ENCODE measurements at regions of chr17 and their contacts with region 1.

Region 1: GRCh38 chr17:39927101-39927928 is at the starts of genes LRRC3C and ORMDL3:
- DNase-seq: peak; percentile 80 to 96 (median 91)
- ATAC-seq: peak; percentile 70
- H3K4me3 ChIP-seq: peak within 1 kb of the TSS; percentile 87 to 90
- H3K4me3 Mint-ChIP-seq: peak within 1 kb of the TSS; percentile 96
- H3K27ac ChIP-seq: peak within 1 kb of the TSS; percentile 70 to 71
- H3K27ac Mint-ChIP-seq: peak within 1 kb of the TSS; percentile 91
- H3K4me1 ChIP-seq: peaks cover 50% of the 10 kb centered on the region
- H3K4me1 Mint-ChIP-seq: peaks cover 42% of the 10 kb centered on the region
- H3K27me3 ChIP-seq: no peaks in the 10 kb centered on the region
- H3K27me3 Mint-ChIP-seq: no peaks in the 10 kb centered on the region
- CTCF ChIP-seq: no peak
- total RNA-seq, gene LRRC3C: not detected
- total RNA-seq, gene ORMDL3: 136 to 140 TPM

Region 2: DNA sequence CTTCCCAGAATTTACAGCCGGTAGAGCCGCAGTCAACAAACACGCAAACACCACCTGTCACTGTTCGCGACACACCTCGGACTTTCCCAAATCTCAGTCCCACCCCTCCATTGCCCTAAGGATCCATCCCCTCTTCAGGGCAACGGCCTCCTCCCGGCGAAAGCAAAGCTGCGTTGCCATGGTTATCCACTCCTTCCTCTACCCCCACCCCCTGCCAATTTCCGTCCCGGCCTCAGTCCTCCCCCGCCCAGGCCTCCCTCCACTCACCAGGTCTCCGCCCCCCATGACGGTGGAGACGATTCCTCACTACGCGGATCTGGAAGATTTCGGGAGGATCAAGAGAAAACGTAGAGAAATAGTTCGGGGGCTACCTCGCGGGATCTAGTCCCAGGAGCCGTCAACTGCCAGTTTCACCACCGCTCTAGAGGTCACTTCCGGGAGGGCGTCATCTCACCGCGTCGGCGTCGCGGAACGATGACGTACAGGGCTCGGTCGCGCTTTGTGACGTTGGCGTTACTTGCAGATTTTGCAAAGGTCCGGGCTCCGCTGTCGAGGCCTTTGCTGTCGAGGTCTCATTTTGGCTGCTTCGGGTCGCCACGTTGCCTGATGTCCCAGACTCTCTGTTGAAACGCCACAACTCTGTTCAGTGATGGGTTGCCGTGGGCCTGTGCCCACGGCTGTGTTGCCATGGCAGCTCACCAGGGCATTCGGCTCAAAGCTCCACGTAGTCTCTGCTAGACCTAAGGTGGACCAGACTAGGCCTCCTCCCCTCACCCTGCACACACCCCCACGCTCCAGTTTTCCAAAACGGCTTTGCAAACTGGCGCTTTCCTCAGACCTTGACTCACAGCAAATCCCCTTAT is 1102.2 kb before region 1 on chr17 and contains the start of gene CWC25:
- CTCF ChIA-PET with region 1: no interaction called
- POLR2A ChIA-PET with region 1: no interaction called
- intact Hi-C with region 1: loop called in 1 of 2 experiments (anchors 2 kb)
- DNase-seq: peak; percentile 92 to 100 (median 97)
- ATAC-seq: peak; percentile 80
- H3K4me3 ChIP-seq: peak within 1 kb of the TSS; percentile 65 to 88
- H3K4me3 Mint-ChIP-seq: peak within 1 kb of the TSS; percentile 99
- H3K27ac ChIP-seq: peak within 1 kb of the TSS; percentile 97 to 98
- H3K27ac Mint-ChIP-seq: peak within 1 kb of the TSS; percentile 100
- H3K4me1 ChIP-seq: peaks cover 23% of the 10 kb centered on the region
- H3K4me1 Mint-ChIP-seq: peaks cover 35% of the 10 kb centered on the region
- H3K27me3 ChIP-seq: no peaks in the 10 kb centered on the region
- H3K27me3 Mint-ChIP-seq: no peaks in the 10 kb centered on the region
- CTCF ChIP-seq: no peak
- total RNA-seq, gene CWC25: 80.3 to 87.5 TPM

Region 3: DNA sequence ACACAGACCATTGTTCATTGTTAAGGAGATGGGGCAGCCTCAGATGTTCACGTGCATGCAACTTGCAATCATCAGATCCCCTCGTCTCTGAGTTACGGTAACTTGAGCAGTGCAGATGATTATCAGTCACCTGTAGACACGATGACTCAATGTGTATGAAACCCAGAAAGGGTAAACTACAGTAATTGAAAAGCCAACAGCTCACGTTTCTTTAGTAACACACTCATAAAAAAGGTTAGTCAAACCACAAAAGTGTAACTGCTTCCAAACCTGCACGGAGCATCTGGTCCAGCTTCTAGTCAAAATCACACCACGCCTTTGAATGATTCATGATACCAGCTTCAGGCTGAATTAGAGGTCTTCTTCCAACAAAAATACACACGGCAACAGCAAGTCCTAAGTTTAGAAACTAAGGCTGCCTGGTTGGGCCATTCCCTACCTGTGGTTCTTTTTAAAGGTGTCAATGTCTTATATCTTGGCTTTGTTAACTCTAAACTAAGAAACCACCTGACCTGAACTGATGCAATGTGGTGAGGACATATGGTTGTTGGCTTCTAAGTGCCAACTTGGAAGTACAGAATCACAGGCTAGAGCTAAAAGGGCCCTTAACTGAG is 157.2 kb before region 1 on chr17:
- CTCF ChIA-PET with region 1: no interaction called
- POLR2A ChIA-PET with region 1: interaction called, 3 read pairs
- intact Hi-C with region 1: loop called (anchors 5 kb)
- DNase-seq: peak in 8 of 9 experiments; percentile 38 to 90 (median 66)
- ATAC-seq: peak; percentile 78
- H3K4me3 ChIP-seq: peak overlapping the region in 1 of 2 experiments; percentile 1
- H3K4me3 Mint-ChIP-seq: peak overlapping the region; percentile 66
- H3K27ac ChIP-seq: peak overlapping the region; percentile 46 to 82
- H3K27ac Mint-ChIP-seq: peak overlapping the region; percentile 97
- H3K4me1 ChIP-seq: peaks cover 99% of the 10 kb centered on the region
- H3K4me1 Mint-ChIP-seq: peaks cover 96% of the 10 kb centered on the region
- H3K27me3 ChIP-seq: no peaks in the 10 kb centered on the region
- H3K27me3 Mint-ChIP-seq: no peaks in the 10 kb centered on the region
- CTCF ChIP-seq: no peak

Region 4: GRCh38 chr17:39777534-39778365 is 149.6 kb before region 1 on chr17:
- CTCF ChIA-PET with region 1: no interaction called
- POLR2A ChIA-PET with region 1: interaction called, 3 read pairs
- intact Hi-C with region 1: loop called (anchors 5 kb)
- DNase-seq: peak in 2 of 9 experiments; percentile 54 to 71
- ATAC-seq: peak; percentile 46
- H3K4me3 ChIP-seq: peak overlapping the region; percentile 50 to 64
- H3K4me3 Mint-ChIP-seq: peak overlapping the region; percentile 89
- H3K27ac ChIP-seq: peak overlapping the region; percentile 52 to 84
- H3K27ac Mint-ChIP-seq: peak overlapping the region; percentile 97
- H3K4me1 ChIP-seq: peaks cover 87% of the 10 kb centered on the region
- H3K4me1 Mint-ChIP-seq: peaks cover 85% of the 10 kb centered on the region
- H3K27me3 ChIP-seq: no peaks in the 10 kb centered on the region
- H3K27me3 Mint-ChIP-seq: no peaks in the 10 kb centered on the region
- CTCF ChIP-seq: no peak

Region 5: GRCh38 chr17:39800540-39800939 is 126.8 kb before region 1 on chr17:
- CTCF ChIA-PET with region 1: no interaction called
- POLR2A ChIA-PET with region 1: no interaction called
- intact Hi-C with region 1: loop called in 1 of 2 experiments (anchors 5 kb)
- DNase-seq: peak; percentile 16 to 87 (median 61)
- ATAC-seq: peak; percentile 95
- H3K4me3 ChIP-seq: no peak overlapping the region
- H3K4me3 Mint-ChIP-seq: peak overlapping the region; percentile 26
- H3K27ac ChIP-seq: peak overlapping the region; percentile 19 to 49
- H3K27ac Mint-ChIP-seq: peak overlapping the region; percentile 94
- H3K4me1 ChIP-seq: peaks cover 59% of the 10 kb centered on the region
- H3K4me1 Mint-ChIP-seq: peaks cover 64% of the 10 kb centered on the region
- H3K27me3 ChIP-seq: no peaks in the 10 kb centered on the region
- H3K27me3 Mint-ChIP-seq: no peaks in the 10 kb centered on the region
- CTCF ChIP-seq: no peak

Region 6: DNA sequence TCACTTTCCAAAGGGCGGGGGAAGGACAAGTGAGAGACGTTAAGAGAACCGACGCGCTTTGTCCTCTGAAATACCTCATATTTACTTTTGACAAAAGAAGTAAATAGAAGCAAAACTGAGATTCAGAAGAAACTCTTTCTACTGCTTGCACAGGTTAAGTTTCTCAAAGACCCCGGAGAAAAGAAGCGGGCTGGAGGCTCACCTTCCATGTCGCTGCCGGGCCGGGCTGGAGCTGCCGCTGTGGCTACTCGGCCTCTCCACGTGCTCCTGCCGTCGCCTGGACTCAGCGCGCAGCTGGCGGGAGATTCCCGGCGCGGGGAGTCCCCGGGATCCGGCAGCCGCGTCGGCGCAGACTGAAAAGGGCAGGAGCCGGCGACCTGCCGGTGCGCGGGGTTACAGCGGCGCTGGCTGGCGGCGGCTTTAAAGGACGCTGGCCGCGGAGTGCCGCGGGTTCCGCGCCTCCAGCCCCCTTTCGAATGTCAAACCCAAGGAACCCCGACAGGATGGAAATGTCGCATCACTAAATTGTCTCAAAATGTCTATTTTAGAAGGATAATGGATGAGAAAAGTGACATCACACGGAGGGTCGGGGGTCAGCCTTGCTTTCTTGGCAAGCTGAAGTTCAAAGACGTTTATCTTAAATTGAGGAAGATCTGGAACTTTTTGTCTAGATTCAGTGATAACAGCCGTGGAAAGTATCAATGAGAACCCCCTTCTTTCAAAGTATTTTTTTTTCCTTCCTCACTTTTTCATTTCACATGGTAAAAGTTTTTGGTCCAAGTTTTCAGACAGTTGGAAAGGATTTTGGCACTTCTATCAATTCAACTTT is 63.2 kb before region 1 on chr17 and contains the start of gene IKZF3:
- CTCF ChIA-PET with region 1: interaction called, 5 read pairs
- POLR2A ChIA-PET with region 1: interaction called, 7 read pairs
- intact Hi-C with region 1: loop called (anchors 2 kb)
- DNase-seq: peak; percentile 59 to 96 (median 78)
- ATAC-seq: peak; percentile 67
- H3K4me3 ChIP-seq: peak within 1 kb of the TSS; percentile 65 to 74
- H3K4me3 Mint-ChIP-seq: peak within 1 kb of the TSS; percentile 89
- H3K27ac ChIP-seq: peak within 1 kb of the TSS; percentile 92 to 94
- H3K27ac Mint-ChIP-seq: peak within 1 kb of the TSS; percentile 98
- H3K4me1 ChIP-seq: peaks cover 56% of the 10 kb centered on the region
- H3K4me1 Mint-ChIP-seq: peaks cover 61% of the 10 kb centered on the region
- H3K27me3 ChIP-seq: no peaks in the 10 kb centered on the region
- H3K27me3 Mint-ChIP-seq: no peaks in the 10 kb centered on the region
- CTCF ChIP-seq: peak; percentile 49
- total RNA-seq, gene IKZF3: 57.3 to 59.8 TPM

Region 7: DNA sequence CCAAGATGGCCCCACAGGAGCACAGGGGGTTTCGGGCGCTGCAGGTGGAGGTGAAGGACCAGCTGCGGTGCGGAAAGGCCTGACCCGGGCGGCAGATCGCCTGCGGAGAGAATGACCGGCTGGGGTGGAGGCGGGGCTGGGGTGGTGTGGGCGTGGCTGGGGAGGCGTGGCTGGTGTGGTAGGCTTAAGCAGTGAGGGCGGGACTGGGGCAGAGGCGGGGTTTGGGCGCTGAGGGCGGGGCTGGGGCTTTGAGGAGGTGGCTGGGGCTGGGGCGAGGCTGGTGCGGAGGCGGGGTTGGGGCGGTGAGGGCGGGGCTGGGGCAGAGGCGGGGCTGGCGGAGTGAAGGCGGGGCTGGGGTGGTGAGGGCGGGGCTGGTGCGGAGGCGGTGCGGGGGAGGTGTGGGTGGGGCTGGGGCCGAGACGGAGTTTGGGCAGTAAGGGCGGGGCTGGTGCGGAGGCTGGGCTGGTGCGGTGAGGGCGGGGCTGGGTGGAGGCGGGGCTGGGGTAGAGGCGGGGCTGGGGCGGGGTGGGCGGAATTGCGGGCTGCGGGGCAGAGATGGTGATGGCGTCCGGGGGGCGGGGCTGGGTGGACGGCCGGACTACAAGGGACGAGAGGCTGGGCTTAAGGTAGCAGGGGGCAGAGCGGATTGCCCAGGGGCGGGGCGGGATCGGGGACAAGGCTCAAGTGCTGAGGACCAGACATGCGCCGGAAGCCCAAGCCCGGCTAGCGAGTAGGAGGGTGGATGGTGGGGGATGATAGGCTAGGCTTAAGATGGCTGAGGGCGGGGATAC is 25.6 kb after region 1 on chr17:
- CTCF ChIA-PET with region 1: interaction called, 3 read pairs
- POLR2A ChIA-PET with region 1: interaction called, 5 read pairs
- intact Hi-C with region 1: loop called (anchors 1 kb)
- DNase-seq: peak; percentile 92 to 97 (median 95)
- ATAC-seq: peak; percentile 87
- H3K4me3 ChIP-seq: peak overlapping the region; percentile 66 to 80
- H3K4me3 Mint-ChIP-seq: peak overlapping the region; percentile 86
- H3K27ac ChIP-seq: peak overlapping the region; percentile 51 to 74
- H3K27ac Mint-ChIP-seq: peak overlapping the region; percentile 89
- H3K4me1 ChIP-seq: peaks cover 26% of the 10 kb centered on the region
- H3K4me1 Mint-ChIP-seq: peaks cover 22% of the 10 kb centered on the region
- H3K27me3 ChIP-seq: no peaks in the 10 kb centered on the region
- H3K27me3 Mint-ChIP-seq: no peaks in the 10 kb centered on the region
- CTCF ChIP-seq: no peak

Region 8: DNA sequence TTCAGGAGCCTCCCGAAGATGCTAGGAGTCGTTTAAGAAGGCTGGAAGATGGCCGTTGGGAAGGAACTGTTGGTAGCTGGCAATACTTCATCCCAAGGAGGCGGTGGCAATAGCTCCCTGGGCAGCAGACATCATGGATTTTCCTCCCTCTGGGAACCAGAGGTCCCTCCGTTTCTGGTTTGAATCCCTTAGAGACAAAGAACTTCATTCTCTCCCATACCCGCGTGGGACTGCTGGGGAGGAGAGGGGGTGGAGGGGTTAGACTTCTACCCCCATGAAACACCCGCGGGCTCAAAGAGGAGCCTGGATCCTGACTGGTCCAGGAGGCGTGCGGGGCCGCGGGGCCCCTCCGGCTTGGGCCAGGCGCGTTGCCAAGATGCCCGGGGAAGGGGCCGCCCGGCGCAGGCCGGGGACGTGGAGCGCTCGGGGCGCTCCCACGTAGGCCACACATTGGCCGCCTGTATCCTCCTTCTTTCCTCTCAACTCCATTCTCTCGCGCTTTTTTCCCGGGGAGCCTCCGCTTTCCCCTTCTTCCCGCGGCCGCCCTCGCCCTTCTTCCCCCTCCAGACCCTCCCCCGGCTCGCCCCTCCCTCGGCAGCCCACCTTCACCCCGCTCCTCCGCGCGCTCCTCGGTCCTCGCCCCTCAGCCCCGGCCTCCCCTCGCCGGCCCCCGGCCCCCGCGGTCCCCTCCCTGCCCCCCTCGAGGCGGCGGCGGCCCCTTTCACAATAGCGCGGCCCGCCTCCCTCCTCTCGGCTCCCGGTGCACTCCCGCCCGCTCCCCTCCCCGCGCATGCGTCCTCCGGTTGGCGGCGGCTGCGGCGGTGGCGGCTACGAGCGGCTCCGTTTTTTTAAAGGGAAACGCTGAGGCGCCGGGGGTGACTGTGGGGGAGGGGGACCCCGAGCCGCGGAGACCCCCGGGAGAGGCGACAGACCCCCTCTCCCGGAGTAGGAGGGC is 194.1 kb after region 1 on chr17 and contains the start of gene MSL1:
- CTCF ChIA-PET with region 1: no interaction called
- POLR2A ChIA-PET with region 1: no interaction called
- intact Hi-C with region 1: no loop called
- DNase-seq: peak; percentile 69 to 92 (median 85)
- ATAC-seq: peak; percentile 65
- H3K4me3 ChIP-seq: peak within 1 kb of the TSS; percentile 75 to 93
- H3K4me3 Mint-ChIP-seq: peak within 1 kb of the TSS; percentile 81
- H3K27ac ChIP-seq: peak within 1 kb of the TSS; percentile 40 to 71
- H3K27ac Mint-ChIP-seq: peak within 1 kb of the TSS; percentile 83
- H3K4me1 ChIP-seq: peaks cover 14% of the 10 kb centered on the region
- H3K4me1 Mint-ChIP-seq: peaks cover 44% of the 10 kb centered on the region
- H3K27me3 ChIP-seq: no peaks in the 10 kb centered on the region
- H3K27me3 Mint-ChIP-seq: no peaks in the 10 kb centered on the region
- CTCF ChIP-seq: no peak
- total RNA-seq, gene MSL1: 43.8 to 46.6 TPM

Measured in CD8-positive, alpha-beta T cell (primary cell).